ENCODE measurements at regions of chr17 and their contacts with region 1.

Region 1: DNA sequence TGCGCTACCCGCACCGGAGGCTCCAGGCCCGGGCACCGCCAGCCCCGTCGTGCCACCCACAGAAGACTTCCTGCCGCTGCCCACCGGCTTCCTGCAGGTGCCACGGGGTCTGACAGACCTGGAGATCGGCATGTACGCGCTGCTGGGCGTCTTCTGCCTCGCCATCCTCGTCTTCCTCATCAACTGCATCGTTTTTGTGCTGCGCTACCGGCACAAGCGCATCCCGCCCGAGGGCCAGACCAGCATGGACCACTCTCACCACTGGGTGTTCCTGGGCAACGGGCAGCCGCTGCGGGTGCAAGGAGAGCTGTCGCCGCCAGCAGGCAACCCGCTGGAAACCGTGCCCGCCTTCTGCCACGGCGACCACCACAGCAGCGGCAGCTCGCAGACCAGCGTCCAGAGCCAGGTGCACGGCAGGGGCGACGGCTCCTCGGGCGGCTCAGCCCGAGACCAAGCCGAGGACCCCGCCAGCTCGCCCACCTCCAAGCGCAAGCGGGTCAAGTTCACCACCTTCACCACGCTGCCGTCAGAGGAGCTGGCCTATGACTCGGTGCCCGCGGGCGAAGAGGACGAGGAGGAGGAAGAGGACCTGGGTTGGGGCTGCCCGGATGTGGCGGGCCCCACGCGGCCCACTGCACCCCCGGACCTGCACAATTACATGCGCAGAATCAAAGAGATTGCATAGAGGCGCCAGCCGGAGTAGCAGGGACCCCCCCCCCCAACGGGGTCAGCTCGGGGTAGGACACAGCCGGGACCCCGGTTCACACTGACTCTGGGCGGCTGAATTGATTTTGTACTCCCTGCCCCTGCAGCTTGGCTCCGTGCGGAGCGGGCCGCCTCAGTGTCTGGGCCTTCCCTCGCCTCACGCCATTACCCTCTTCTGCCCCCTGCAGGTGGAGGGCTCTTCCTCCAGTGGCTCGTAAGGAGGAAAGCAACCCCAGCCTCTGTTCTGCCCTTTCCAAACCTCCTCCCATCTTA is 58.5 kb downstream of the TMEM132E start:
- DNase-seq: peak; percentile 73 to 82 (median 80)
- H3K4me3 ChIP-seq: peak overlapping the region in 2 of 4 donors; percentile 10 to 33
- H3K27ac ChIP-seq: no peak overlapping the region
- H3K4me1 ChIP-seq: peaks cover 4 to 5% of the 10 kb centered on the region in 2 donors
- H3K27me3 ChIP-seq: peaks cover 22% of the 10 kb centered on the region
- CTCF ChIP-seq: peak; percentile 75 to 87 (median 82)
- POLR2A ChIP-seq: no peak

Region 2: GRCh38 chr17:34412965-34413441 is 224.8 kb before region 1 on chr17:
- intact Hi-C with region 1: loop called in 1 of 2 experiments (anchors 10 kb)
- DNase-seq: no peak
- H3K4me3 ChIP-seq: no peak overlapping the region
- H3K27ac ChIP-seq: no peak overlapping the region
- H3K4me1 ChIP-seq: no peaks in the 10 kb centered on the region
- H3K27me3 ChIP-seq: peaks cover 8% of the 10 kb centered on the region
- CTCF ChIP-seq: no peak
- POLR2A ChIP-seq: no peak

Region 3: DNA sequence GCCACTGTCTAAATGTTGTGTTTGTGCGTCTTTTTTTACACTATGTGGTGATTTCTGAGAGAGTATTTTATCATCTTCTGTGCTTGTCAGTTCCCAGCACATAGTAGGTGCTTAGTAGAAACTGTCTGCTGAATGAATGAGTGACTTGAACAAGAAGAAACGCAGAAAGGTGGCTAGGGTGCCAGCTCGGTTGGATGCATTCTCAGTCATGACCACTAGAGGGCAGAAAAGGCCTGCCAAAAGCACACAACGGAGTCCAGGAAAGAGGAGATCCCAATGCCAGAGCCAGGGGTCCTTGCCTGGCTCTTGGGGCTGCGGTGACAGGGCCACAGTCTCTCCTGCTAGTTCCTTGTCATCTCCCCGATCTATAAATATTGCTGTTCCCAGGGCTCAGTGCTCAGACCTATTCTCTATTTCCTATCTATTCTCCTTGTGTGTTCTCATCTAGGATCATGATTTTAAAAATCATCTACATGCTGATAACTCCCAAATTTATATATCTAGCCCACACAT is 217.5 kb before region 1 on chr17:
- intact Hi-C with region 1: loop called (anchors 5 to 10 kb)
- DNase-seq: peak; percentile 39 to 85 (median 68)
- H3K4me3 ChIP-seq: no peak overlapping the region
- H3K27ac ChIP-seq: no peak overlapping the region
- H3K4me1 ChIP-seq: no peaks in the 10 kb centered on the region
- H3K27me3 ChIP-seq: peaks cover 20% of the 10 kb centered on the region
- CTCF ChIP-seq: peak; percentile 87 to 94 (median 91)
- POLR2A ChIP-seq: no peak

Region 4: DNA sequence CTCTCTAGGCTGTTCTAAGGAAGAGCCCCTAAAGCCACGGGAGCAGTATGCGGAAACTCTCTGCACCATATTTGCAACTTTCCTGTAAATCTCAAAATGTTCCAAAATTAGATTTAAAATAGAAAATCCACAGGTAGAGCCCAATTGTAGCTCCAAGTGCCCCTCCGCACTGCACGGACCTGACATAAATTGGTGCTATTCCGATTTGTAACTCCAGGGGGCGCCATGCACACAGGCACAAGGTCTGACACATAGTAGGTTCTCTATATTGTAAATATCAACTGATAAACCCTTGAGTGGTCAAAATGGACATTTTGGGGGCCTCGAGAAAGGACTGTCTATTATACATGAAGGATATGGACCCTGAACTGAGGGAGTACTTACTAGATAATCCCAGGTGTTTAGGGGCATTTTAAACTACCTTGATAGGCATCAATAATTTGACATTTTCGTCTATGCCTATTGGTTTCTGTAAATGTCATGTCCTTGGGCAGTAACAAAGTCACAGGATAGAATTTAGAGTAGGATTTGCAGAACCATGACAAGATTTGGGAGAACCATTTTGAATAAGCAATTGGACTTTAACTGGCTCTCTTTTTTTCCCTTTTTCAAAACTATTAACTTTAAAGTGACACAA is 95.0 kb before region 1 on chr17:
- intact Hi-C with region 1: loop called in 1 of 2 experiments (anchors 10 kb)
- DNase-seq: peak in 4 of 7 donors; percentile 38 to 54 (median 43)
- H3K4me3 ChIP-seq: no peak overlapping the region
- H3K27ac ChIP-seq: no peak overlapping the region
- H3K4me1 ChIP-seq: no peaks in the 10 kb centered on the region
- H3K27me3 ChIP-seq: peaks cover 11% of the 10 kb centered on the region
- CTCF ChIP-seq: peak; percentile 51 to 82 (median 72)
- POLR2A ChIP-seq: no peak

Region 5: GRCh38 chr17:34549966-34550365 is 87.9 kb before region 1 on chr17:
- intact Hi-C with region 1: loop called (anchors 5 to 10 kb)
- DNase-seq: no peak
- H3K4me3 ChIP-seq: no peak overlapping the region
- H3K27ac ChIP-seq: no peak overlapping the region
- H3K4me1 ChIP-seq: no peaks in the 10 kb centered on the region
- H3K27me3 ChIP-seq: no peaks in the 10 kb centered on the region
- CTCF ChIP-seq: no peak
- POLR2A ChIP-seq: no peak

Region 6: DNA sequence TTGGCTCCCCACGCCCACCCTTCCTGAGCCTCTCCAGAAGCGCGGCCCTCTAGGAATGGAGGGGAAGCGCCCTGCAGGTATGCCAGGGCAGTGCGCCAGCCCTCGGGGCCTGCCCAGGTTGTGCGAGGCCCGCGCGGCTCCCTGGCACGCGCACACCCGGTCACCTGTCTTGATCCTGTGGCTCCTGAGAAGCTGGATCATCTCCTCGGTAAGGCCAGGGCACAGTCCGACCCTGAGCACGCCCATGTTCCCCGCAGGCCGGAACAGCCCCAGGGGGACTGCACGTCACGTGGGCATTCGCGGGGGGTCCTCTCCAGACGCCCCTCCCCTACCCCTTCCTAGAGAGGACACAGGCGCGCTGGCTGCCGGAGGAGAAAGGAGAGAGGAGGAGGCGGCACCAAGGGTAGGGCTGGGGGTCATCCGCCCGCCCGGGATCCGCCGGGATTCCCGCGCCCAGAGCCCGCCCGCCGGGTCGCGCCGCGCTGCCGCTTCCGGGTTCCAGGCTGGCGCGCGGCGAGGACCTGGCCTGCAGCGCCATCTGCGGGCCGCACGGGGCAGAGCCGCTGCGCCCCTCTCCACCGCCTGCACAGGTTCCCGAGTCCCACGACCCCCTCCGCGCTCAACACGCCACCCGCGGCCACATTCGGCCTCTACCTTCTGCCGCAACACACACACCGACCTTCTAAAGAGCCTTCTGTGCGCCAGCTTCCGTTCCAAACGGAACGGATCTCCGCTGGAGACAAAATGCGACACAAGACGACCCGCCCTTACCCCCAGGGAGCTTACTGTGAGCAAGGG is 481.7 kb after region 1 on chr17 and contains the start of gene RAD51D:
- intact Hi-C with region 1: loop called in 1 of 2 experiments (anchors 10 kb)
- DNase-seq: peak; percentile 58 to 80 (median 70)
- H3K4me3 ChIP-seq: peak within 1 kb of the TSS; percentile 12 to 83 (median 78)
- H3K27ac ChIP-seq: peak within 1 kb of the TSS in 3 of 5 donors; percentile 38 to 67 (median 43)
- H3K4me1 ChIP-seq: peaks cover 7 to 12% of the 10 kb centered on the region in 2 donors
- H3K27me3 ChIP-seq: no peaks in the 10 kb centered on the region
- CTCF ChIP-seq: peak; percentile 48 to 98 (median 82)
- POLR2A ChIP-seq: peak; percentile 19 to 25
- total RNA-seq, gene RAD51D: 3.3 to 14.3 (median 8.7) TPM